HepG2 (cell line): ENCODE measurements at regions of chr1 and their contacts with region 1.

Region 1: DNA sequence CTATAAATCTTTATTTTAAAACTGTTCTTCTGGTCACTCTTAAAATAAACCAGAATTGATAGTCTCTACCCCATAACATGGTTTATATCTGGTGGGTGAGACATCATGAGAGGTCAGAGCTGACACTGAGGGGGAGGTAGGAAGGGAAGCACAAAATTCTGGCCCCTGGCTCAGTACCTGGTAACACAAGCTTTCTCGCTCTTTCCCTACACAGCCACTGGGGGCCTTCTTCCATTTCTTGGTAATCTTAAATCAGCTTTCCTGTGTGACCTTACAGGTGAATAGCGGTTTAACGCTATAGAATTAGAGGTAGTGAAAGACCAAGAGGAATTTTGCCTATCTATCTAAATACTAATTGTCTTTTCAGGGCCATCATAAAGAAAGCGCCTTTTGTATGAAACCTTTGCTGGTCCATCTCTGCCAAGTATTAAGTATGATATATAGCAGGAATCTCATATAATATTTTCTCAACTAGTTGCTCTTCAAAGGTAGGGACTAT is 5.3 kb downstream of the CRNN start:
- DNase-seq: no peak
- ATAC-seq: no peak
- H3K4me3 ChIP-seq: no peak overlapping the region
- H3K27ac ChIP-seq: no peak overlapping the region
- H3K4me1 ChIP-seq: no peaks in the 10 kb centered on the region
- H3K27me3 ChIP-seq: peaks cover 0 to 5% of the 10 kb centered on the region in 2 experiments; a peak in 1 of 5 replicates
- CTCF ChIP-seq: no peak
- EP300 ChIP-seq: no peak
- POLR2A ChIP-seq: no peak
- RAD21 ChIP-seq: no peak

Region 2: DNA sequence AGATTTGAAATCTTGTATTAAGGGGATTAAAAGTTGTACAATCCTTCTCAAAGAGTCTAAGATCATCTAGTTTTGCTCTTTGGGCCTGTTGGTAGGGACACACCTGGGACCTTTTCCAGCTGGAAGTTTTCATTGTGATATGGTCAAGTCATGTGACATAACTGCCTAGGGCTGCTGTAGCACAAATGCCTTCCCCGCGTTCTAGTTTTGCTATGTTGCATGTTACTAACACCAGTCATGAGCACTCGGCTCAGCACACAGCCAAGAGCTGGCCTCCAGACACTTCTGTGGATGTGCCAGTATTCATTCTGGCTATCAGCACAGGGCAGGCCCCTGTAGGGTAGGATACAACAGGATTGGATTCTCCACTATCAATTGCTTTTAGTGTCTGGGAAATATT is 34.3 kb before region 1 on chr1:
- CTCF ChIA-PET with region 1: no interaction called
- POLR2A ChIA-PET with region 1: no interaction called
- in situ Hi-C with region 1: no loop called
- intact Hi-C with region 1: no loop called
- DNase-seq: no peak
- ATAC-seq: no peak
- H3K4me3 ChIP-seq: no peak overlapping the region
- H3K27ac ChIP-seq: no peak overlapping the region
- H3K4me1 ChIP-seq: no peaks in the 10 kb centered on the region
- H3K27me3 ChIP-seq: peaks cover 0 to 3% of the 10 kb centered on the region in 2 experiments; a peak in 1 of 5 replicates
- CTCF ChIP-seq: no peak
- EP300 ChIP-seq: no peak
- POLR2A ChIP-seq: no peak
- RAD21 ChIP-seq: no peak

Region 3: DNA sequence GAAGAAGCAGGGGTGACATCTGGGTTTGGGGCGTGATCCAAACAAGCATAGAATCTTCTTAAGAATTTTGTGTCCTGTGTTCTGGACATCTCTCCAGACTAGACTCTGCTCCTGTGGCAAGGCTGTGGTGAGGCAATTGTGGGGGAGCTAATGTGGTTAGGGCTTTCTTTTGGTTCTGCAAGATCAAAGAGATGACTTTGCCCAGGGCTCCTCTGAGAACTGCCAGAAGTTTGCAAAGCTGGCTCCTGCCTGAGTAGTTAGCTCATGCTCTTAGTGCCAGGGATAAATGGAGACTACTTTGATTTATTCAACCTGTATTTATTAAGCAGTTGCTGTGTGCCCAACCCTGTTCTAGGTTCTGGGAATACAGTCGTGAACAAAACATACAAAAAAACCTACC is 39.4 kb after region 1 on chr1:
- CTCF ChIA-PET with region 1: no interaction called
- POLR2A ChIA-PET with region 1: no interaction called
- in situ Hi-C with region 1: loop called (anchors 5 kb)
- intact Hi-C with region 1: loop called (anchors 2 kb)
- DNase-seq: no peak
- ATAC-seq: no peak
- H3K4me3 ChIP-seq: no peak overlapping the region
- H3K27ac ChIP-seq: no peak overlapping the region
- H3K4me1 ChIP-seq: no peaks in the 10 kb centered on the region
- H3K27me3 ChIP-seq: no peaks in the 10 kb centered on the region
- CTCF ChIP-seq: no peak
- EP300 ChIP-seq: no peak
- POLR2A ChIP-seq: no peak
- RAD21 ChIP-seq: no peak